ENCODE measurements at regions of chr13 and their contacts with region 1.

Region 1: DNA sequence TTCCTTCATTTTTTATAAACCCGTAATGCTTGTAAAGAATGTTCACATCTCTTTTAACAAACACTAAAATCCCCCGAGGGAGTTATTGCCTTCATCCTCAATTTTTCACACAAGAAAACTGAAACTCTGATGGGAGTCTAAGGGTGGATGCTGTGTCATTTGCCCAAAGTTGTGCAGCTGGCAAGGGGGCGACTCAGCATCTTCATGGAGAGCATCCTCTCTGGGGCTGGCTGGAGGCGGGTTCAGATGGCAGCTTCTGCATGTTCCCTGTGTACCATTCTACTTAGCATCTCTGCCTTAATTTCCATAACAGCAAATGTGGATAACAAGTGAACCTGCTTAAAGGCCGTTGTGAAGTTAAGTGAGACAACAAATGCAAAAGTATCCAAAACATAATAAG is 256.4 kb downstream of the IRS2 start:
- DNase-seq: no peak
- H3K4me3 Mint-ChIP-seq: no peak overlapping the region
- H3K27ac Mint-ChIP-seq: no peak overlapping the region
- H3K4me1 Mint-ChIP-seq: no peaks in the 10 kb centered on the region
- H3K27me3 Mint-ChIP-seq: no peaks in the 10 kb centered on the region

Region 2: GRCh38 chr13:109281017-109281902 is 248.7 kb before region 1 on chr13:
- intact Hi-C with region 1: loop called (anchors 5 kb)
- DNase-seq: no peak
- H3K4me3 Mint-ChIP-seq: no peak overlapping the region
- H3K27ac Mint-ChIP-seq: no peak overlapping the region
- H3K4me1 Mint-ChIP-seq: no peaks in the 10 kb centered on the region
- H3K27me3 Mint-ChIP-seq: no peaks in the 10 kb centered on the region

Region 3: DNA sequence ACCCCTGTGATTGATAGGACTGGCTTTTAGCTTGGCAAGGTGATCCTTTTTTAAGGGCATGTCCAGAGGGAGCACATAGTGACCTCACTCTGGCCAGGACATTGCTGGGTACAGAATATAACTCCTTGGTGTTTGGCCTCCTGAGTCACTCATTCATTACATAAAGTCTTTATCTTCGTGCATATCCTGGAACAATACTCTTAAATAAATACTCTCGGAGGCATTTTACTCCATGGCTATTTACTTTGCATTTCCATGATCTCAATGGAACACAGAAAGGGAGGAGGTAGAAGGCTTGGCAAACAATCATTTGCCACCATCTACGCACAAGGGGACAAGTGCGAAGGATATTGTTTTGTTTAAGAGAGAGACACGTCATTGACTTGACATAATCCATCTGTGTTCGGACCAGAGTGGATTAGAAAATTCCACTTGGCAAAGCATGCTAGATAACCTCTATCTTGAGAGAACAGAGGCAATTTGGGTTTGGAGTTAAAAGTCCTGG is 46.4 kb after region 1 on chr13:
- intact Hi-C with region 1: no loop called
- DNase-seq: no peak
- H3K4me3 Mint-ChIP-seq: no peak overlapping the region
- H3K27ac Mint-ChIP-seq: no peak overlapping the region
- H3K4me1 Mint-ChIP-seq: peaks cover 1% of the 10 kb centered on the region
- H3K27me3 Mint-ChIP-seq: peaks cover 17% of the 10 kb centered on the region

Region 4: DNA sequence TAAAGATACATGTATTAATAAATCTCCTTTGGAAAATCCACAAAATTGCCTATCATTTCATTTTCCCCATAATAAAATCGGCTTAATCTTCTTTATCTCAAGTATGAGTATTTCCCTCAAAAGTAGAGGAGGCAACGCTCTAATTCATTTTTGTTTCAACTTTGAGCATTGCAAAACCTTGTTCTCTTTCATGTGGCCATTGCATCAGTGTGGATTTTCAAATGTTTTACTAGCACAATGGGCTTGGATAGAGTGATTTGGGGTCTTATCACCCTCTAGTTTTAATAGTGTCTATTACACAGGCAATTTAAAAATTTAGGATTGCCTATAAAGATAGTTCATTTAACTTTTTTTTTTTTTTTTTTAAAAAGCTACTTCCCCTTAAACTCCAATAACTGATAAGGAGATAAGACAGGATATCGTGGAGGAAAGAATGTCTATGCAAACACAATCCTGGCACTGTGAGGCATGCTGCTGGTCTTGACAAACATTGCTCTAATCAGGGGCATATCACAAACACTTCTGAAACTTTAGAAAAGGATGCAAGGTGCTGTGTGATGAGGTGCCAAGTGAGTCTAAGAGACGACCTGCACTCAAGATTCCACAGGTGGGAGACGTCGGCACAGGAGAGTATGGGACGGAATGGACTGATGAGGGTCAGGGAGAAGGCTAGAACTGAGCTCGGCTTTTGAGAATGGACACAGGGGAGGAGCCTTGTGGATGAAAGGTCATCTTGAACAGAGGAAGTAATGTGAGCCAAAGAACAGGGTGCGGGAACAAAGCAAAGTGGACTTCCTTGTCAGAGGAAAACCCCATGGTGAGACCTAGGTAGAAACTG is 56.8 kb after region 1 on chr13:
- intact Hi-C with region 1: no loop called
- DNase-seq: no peak
- H3K4me3 Mint-ChIP-seq: no peak overlapping the region
- H3K27ac Mint-ChIP-seq: no peak overlapping the region
- H3K4me1 Mint-ChIP-seq: no peaks in the 10 kb centered on the region
- H3K27me3 Mint-ChIP-seq: peaks cover 2% of the 10 kb centered on the region

Measured in activated CD4-positive, alpha-beta T cell treated with anti-CD3 and anti-CD28 coated beads, Interleukin-2, amount 10 ng/mL, durations not matched to agents 24 days and 14 days (primary cell).